ENCODE measurements at regions of chr21 and their contacts with region 1.

Region 1: DNA sequence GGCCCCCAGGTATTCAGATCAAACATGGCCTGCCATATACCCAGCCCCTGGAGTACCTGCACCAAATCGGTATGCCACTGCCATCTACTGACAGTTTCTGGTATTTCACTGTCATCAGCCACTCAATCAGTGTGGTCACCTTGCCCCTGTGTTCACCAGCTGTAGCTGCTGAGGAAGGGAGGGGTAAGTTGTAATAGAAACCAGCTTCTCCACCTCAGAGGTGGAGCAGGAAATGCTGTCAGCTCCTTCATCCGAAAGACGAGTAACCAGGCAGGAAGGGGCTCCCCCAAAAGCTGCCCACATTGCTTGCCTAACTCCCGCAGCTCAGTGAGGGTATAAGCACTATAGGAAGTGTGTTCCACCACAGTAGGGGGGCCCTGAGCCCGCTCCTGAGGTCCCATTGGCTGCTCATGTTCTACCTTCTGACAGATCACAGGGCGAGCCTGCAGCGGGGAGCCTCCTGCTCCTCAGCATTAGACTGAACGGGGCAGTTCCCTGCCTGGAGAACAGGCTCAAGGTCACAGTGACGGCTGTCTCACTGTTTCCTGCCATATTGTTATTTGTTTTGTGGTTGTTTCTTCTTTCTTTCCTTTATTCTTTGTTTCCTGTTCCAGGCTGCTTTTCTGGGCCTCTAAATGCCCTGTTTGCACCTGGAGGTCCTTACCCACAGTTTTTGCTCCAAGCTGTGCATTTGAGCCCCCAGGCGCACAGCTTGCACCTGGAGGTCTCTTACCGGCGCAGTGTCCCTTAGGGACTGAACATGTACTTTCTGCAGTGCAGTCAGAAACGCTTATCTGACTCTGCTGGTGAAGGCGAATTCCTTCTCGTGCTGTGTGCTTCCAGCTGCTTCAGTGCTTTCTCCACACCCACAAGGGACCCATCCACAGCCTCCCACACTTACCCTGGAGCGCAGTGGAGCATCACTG is 1638.3 kb downstream of the MRPL39 start:
- DNase-seq: peak; percentile 79
- ATAC-seq: peak; percentile 90
- H3K4me3 Mint-ChIP-seq: no peak overlapping the region
- H3K27ac Mint-ChIP-seq: no peak overlapping the region
- H3K4me1 Mint-ChIP-seq: peaks cover 11% of the 10 kb centered on the region
- H3K27me3 Mint-ChIP-seq: no peaks in the 10 kb centered on the region

Region 2: DNA sequence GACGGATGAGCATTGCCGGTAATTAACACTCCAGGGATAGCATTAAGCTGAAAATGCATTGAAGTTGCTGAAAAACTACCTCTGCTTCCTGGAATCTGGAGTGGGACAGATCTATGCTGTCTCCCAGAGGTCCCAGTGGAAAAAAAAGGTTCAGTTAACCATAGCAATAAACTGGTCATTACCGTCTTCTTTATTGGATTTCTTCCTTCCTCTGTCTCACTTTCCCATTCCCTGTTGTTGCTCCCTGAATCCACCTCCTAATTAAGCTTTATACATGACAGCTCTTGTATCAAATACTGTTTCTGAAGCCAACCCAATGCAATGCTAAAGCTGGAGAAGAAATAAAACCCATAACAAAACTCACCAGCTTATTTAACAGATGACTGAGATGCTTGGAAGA is 1164.8 kb before region 1 on chr21:
- CTCF ChIA-PET with region 1: no interaction called
- POLR2A ChIA-PET with region 1: no interaction called
- intact Hi-C with region 1: loop called in 1 of 2 experiments (anchors 10 kb)
- DNase-seq: no peak
- ATAC-seq: no peak
- H3K4me3 Mint-ChIP-seq: no peak overlapping the region
- H3K27ac Mint-ChIP-seq: no peak overlapping the region
- H3K4me1 Mint-ChIP-seq: no peaks in the 10 kb centered on the region
- H3K27me3 Mint-ChIP-seq: no peaks in the 10 kb centered on the region

Region 3: GRCh38 chr21:23853796-23854379 is 115.1 kb before region 1 on chr21:
- CTCF ChIA-PET with region 1: interaction called, 6 read pairs
- POLR2A ChIA-PET with region 1: no interaction called
- intact Hi-C with region 1: loop called (anchors 1 kb)
- DNase-seq: no peak
- ATAC-seq: peak; percentile 61
- H3K4me3 Mint-ChIP-seq: no peak overlapping the region
- H3K27ac Mint-ChIP-seq: no peak overlapping the region
- H3K4me1 Mint-ChIP-seq: peaks cover 2% of the 10 kb centered on the region
- H3K27me3 Mint-ChIP-seq: no peaks in the 10 kb centered on the region

Region 4: DNA sequence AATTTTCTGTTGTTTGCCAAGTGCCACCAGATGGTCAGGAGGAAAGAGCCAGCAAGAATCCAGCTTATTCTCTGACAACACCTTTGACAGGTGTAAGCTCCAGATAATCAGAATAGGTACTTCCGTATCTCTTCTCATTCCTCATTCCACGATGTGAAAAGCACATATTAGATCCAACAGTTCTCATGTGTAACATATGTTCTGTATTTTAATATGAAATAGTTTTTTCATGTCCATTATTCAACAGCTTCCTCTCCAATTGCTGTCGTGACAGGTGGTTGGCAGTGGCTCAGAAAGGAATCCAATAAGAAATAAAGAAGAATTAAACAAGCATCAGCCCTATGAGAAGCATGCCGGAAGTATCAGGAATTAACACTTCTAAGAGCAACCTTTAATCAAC is 13.6 kb after region 1 on chr21:
- CTCF ChIA-PET with region 1: interaction called, 13 read pairs
- POLR2A ChIA-PET with region 1: no interaction called
- intact Hi-C with region 1: no loop called
- DNase-seq: no peak
- ATAC-seq: no peak
- H3K4me3 Mint-ChIP-seq: no peak overlapping the region
- H3K27ac Mint-ChIP-seq: no peak overlapping the region
- H3K4me1 Mint-ChIP-seq: no peaks in the 10 kb centered on the region
- H3K27me3 Mint-ChIP-seq: no peaks in the 10 kb centered on the region